Activated CD8-positive, alpha-beta T cell treated with anti-CD3 and anti-CD28 coated beads, Interleukin-2, amount 10 ng/mL, durations not matched to agents 7 days and 5 days (primary cell): ENCODE measurements at regions of chr2 and their contacts with region 1.

Region 1: GRCh38 chr2:75640621-75641121 is 5.9 kb upstream of the MRPL19 start:
- DNase-seq: peak; percentile 61
- ATAC-seq: peak; percentile 93
- H3K4me3 Mint-ChIP-seq: no peak overlapping the region
- H3K27ac Mint-ChIP-seq: no peak overlapping the region
- H3K4me1 Mint-ChIP-seq: no peaks in the 10 kb centered on the region
- H3K27me3 Mint-ChIP-seq: peaks cover 15% of the 10 kb centered on the region

Region 2: DNA sequence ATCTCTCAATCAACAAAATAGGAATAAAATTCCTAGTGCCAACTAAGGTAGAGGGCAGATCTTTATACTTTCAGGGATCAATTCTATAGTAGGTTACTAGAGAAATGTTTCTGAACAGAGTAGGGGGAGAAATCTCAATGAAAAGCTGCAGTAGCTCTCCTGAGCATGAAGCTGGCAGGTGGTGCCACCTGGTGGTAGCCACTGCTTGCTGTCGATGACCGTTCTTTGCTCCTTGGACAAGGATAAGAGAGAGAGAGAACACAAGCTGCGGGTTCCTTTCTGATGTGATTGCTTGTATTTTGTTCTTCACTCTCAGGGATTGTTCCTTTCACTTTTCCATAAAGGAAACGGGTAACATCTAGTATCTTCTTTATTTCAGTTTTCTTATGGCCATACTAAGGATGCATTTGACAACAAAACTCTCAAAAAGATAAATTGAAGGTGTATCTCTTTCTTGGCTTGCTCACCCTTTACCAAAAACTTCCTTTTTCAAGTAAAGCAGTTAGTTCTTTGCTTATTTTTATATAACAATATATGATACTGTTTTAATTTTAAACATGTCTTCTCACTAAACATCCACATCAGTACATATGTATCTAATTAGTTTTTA is 12.7 kb before region 1 on chr2:
- CTCF ChIA-PET with region 1: interaction called, 13 read pairs
- POLR2A ChIA-PET with region 1: no interaction called
- DNase-seq: peak; percentile 70
- ATAC-seq: peak; percentile 81
- H3K4me3 Mint-ChIP-seq: no peak overlapping the region
- H3K27ac Mint-ChIP-seq: no peak overlapping the region
- H3K4me1 Mint-ChIP-seq: no peaks in the 10 kb centered on the region
- H3K27me3 Mint-ChIP-seq: peaks cover 9% of the 10 kb centered on the region